HEK293T (cell line): ENCODE measurements at regions of chr16 and their contacts with region 1.

Region 1: GRCh38 chr16:71610936-71611871 is 14.8 kb upstream of the MARVELD3 start:
- DNase-seq: peak; percentile 86

Region 2: DNA sequence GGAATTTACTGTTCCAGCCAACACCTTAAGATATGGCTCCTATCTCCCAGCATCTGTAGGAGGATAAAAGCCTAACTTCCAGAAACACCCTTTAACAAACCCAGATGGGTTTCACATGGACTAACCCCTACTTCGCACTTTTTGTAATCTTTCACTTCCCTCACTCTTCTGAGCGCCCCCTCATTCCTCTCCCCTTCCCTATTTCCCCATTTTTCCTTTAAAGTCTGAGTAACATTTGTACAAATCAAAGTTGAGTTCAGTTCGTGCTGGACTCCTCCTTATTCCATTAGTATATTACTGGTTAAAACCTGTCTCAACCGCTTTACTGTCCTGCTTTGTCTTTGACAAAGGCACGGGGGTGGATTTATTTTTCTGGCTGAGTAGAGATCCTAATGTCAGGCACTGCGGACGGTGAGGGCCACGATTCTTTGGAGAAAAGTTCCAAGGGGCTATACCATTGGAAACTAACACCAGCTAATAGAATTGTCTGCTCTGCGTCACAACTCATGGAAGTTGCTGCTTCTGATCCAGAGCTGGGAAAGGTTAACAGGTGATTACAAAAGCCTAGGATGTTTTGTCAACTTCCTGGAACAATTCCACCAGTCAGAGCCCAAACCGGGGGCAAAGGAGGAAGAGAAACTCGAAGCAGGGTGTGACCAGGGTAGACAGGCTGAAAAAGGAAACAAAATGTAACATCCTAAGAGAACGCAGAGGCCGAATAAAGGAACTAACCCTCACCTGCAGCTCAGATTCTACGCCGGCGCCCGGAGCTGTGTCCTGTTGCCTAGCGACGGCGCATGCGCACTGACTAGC is 46.8 kb before region 1 on chr16:
- CTCF ChIA-PET with region 1: interaction called, 30 read pairs
- POLR2A ChIA-PET with region 1: interaction called, 31 read pairs
- DNase-seq: no peak

Region 3: DNA sequence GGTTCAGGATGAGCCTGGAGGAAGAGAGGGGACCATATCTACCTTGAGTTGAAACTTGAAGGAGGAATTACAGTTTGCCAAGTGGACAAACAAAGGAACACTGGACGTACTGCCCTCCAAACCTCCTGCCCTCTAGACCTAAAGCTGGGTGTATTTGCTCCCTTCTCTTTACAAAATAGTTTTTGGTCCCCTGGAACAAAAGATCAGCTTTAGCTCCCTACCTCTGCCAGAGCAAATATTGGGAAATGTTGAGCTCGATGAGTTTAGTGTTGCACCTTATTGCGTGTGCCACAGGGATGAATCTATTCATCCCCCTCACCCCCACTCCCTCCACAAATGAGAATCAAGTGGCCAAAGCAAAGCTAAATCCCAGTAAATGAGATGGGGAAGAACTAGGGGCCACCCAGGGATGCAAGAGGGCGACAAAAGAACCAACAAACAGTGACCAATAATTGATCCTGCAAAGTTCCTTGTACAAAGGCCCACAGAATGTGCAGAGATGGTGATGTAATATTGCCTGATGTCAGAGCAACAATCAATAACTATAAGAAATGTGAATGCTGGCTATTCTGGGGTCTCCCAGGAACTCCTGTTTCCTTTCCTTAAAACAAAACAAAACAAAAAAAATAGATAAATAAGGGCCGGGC is 17.1 kb before region 1 on chr16:
- CTCF ChIA-PET with region 1: interaction called, 12 read pairs
- POLR2A ChIA-PET with region 1: no interaction called
- DNase-seq: no peak

Region 4: DNA sequence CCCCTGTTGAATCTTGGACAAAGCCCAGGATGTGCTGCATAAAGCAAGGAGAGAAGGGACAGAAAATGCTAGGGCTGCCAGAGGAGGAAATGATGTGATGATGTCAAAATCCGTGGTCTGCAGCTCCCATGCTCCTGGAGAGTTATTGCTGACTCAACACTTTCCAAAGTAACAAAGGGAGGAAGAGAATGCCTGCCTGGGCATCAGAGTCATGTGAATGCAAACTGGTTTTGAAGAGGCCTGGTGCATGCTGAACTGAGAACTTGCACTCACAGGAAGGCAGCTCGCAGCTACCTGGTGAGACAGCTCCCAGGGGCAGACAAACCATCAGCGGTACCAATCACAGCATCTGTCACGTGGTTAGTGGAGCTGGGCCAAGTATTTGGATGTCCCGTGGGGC is 17.6 kb after region 1 on chr16:
- CTCF ChIA-PET with region 1: interaction called, 10 read pairs
- POLR2A ChIA-PET with region 1: interaction called, 3 read pairs
- DNase-seq: no peak

Region 5: GRCh38 chr16:71658771-71659170 is 47.6 kb after region 1 on chr16:
- CTCF ChIA-PET with region 1: no interaction called
- POLR2A ChIA-PET with region 1: no interaction called
- DNase-seq: no peak

Region 6: DNA sequence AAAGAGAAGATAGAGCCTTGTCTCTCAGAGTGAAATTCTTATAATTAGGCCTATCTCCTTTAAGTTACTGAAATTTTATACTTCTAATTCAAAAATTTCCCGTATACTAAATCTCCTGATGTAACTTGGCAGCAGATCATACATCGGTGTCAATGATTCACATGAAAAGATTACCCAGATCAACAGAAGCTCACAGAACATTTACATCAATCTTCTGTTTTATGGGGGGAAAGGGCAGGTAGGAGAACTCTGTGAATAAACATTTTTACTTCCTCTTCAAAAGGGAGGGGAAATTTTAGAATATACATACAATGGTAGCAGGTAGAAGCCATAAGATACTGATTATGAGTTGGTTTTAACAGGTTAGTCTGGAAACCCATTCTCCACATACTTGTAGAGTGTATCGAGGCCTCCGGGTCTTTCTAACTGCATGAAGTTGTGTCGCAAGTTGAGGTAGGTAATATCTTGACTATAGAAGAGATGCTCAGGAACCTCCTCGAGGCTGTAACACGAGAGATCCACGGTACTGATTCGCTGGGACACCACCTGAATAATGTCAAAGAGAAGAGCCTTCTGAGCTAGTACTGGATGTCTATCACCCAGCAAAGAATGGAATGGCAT is 70.3 kb after region 1 on chr16:
- CTCF ChIA-PET with region 1: no interaction called
- POLR2A ChIA-PET with region 1: no interaction called
- DNase-seq: no peak